Psoas muscle (tissue), 8 donors: ENCODE measurements at regions of chr22 and their contacts with region 1.

Region 1: GRCh38 chr22:42649246-42650099 is at the start of gene CYB5R3:
- DNase-seq: peak; percentile 89 to 93
- ATAC-seq: peak; percentile 72 to 78 (median 76)
- H3K4me3 ChIP-seq: peak within 1 kb of the TSS; percentile 96
- H3K27ac ChIP-seq: peak within 1 kb of the TSS; percentile 96
- H3K4me1 ChIP-seq: peaks cover 40% of the 10 kb centered on the region
- H3K27me3 ChIP-seq: no peaks in the 10 kb centered on the region
- CTCF ChIP-seq: peak; percentile 8
- total RNA-seq, gene CYB5R3: 120 to 208 (median 176) TPM

Region 2: GRCh38 chr22:42473484-42474193 is 175.8 kb before region 1 on chr22:
- intact Hi-C with region 1: no loop called
- DNase-seq: no peak
- ATAC-seq: peak in 1 of 4 donors; percentile 47
- H3K4me3 ChIP-seq: no peak overlapping the region
- H3K27ac ChIP-seq: no peak overlapping the region
- H3K4me1 ChIP-seq: no peaks in the 10 kb centered on the region
- H3K27me3 ChIP-seq: no peaks in the 10 kb centered on the region
- CTCF ChIP-seq: peak; percentile 47

Region 3: GRCh38 chr22:42500161-42500835 is 149.2 kb before region 1 on chr22:
- intact Hi-C with region 1: no loop called
- DNase-seq: peak; percentile 82 to 93
- ATAC-seq: peak; percentile 91 to 95 (median 92)
- H3K4me3 ChIP-seq: peak overlapping the region; percentile 58
- H3K27ac ChIP-seq: no peak overlapping the region
- H3K4me1 ChIP-seq: peaks cover 6% of the 10 kb centered on the region
- H3K27me3 ChIP-seq: no peaks in the 10 kb centered on the region
- CTCF ChIP-seq: no peak

Region 4: DNA sequence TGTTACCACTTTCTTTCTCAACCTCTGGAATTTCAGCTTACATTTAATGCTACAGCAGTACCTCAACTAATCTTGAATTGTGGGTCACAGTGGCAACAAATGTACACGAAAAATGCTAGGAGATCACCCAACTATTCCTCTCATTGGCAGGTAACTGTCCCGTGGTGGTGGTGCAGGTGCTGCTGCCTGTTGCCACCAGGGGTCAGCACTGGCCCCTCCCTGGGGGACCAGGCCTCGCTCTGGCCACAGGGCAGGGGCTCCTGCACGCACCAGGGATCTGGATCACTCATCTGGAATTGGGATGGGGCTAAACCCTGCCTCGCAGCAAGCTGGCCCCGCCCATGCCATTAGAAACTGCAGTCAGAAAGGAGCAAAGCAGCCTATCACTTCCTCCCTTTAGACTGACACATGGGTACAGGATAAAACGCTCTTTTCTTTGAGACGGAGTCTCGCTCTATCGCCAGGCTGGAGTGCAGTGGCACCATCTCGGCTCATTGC is 27.9 kb before region 1 on chr22:
- intact Hi-C with region 1: loop called in 1 of 2 experiments (anchors 2 kb)
- DNase-seq: peak; percentile 78 to 90
- ATAC-seq: peak; percentile 78 to 84 (median 81)
- H3K4me3 ChIP-seq: no peak overlapping the region
- H3K27ac ChIP-seq: peak overlapping the region; percentile 64
- H3K4me1 ChIP-seq: peaks cover 14% of the 10 kb centered on the region
- H3K27me3 ChIP-seq: no peaks in the 10 kb centered on the region
- CTCF ChIP-seq: peak; percentile 93

Region 5: DNA sequence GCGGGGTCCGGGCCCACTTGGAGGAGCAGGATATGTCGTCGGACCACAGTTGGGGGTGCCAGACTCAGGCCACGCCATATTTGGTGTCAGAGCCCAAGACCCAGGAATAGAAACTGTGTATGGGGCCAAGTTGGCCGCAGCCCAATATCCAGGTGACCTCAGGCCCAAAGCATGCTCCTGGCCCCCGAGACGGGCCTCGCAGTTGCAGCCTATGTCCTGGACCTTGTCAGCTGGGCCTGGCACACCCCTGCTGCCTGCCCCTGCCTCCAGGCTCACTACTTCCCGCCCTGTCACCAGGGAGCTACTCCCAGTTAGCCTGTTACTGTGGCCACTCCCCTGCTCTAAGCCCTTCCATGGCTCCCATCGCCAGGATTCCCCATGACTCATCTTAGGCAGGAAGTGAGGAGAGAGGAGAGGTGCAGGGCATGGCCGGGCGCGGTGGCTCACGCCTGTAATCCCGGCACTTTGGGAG is 48.1 kb after region 1 on chr22:
- intact Hi-C with region 1: loop called in 1 of 2 experiments (anchors 5 kb)
- DNase-seq: peak; percentile 91 to 97
- ATAC-seq: peak; percentile 85 to 88 (median 86)
- H3K4me3 ChIP-seq: no peak overlapping the region
- H3K27ac ChIP-seq: peak overlapping the region; percentile 90
- H3K4me1 ChIP-seq: peaks cover 66% of the 10 kb centered on the region
- H3K27me3 ChIP-seq: no peaks in the 10 kb centered on the region
- CTCF ChIP-seq: no peak